Sciatic nerve (tissue), 2 donors: ENCODE measurements at regions of chr4 and their contacts with region 1.

Region 1: GRCh38 chr4:153142700-153143438 is 61.4 kb upstream of the TRIM2 start:
- DNase-seq: peak; percentile 83
- ATAC-seq: peak; percentile 83

Region 2: GRCh38 chr4:153318696-153319320 is 175.9 kb after region 1 on chr4:
- intact Hi-C with region 1: loop called (anchors 2 kb)
- DNase-seq: no peak
- ATAC-seq: peak; percentile 80

Region 3: GRCh38 chr4:153773236-153773690 is 630.4 kb after region 1 on chr4:
- intact Hi-C with region 1: no loop called
- DNase-seq: no peak
- ATAC-seq: no peak

Region 4: GRCh38 chr4:154004507-154005170 is 861.8 kb after region 1 on chr4:
- intact Hi-C with region 1: no loop called
- DNase-seq: peak; percentile 67
- ATAC-seq: peak; percentile 98